ENCODE measurements at regions of chr22 and their contacts with region 1.

Region 1: DNA sequence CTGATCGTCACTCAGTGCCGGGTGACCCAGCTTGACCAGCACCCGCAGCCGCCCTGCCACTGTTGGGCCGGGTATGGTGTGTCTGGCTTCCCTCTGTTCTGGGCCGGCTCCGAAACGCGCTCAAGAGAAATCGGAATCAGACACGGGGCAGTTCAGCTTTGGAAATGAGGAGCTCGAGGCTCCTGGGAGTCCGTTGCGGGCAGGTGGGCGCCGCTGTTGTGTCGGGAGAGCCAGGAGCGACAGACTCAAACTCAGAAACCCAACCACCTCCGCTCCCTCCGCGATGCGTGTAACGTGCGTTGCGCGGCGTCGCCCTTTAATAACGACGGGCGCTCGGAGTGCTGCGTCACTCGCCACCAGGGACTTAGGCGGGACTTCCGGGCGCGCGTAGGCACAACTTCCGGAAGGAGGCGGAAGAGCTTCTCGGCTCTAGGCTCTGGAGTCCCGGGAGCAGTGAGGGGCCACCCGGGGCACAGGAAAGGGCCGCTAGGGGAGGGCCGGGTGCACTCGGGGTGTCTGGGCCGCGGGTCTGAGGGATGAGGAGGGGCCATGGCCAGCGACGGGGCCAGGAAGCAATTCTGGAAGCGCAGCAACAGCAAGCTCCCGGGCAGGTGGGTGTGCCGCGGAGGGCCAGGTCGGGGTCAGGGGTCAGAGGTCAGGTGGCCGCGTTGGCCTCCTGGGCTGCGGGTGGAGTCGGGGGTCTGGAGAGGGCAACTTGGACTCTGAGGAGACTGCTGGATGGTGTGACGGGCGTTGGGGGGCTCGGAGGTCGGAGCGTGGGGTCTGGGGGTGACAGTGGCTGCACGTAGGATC is at the start of gene TBC1D22A:
- DNase-seq: peak; percentile 93 to 96 (median 95)
- H3K4me3 ChIP-seq: peak within 1 kb of the TSS; percentile 71 to 98 (median 94)
- H3K27ac ChIP-seq: peak within 1 kb of the TSS; percentile 92 to 96
- H3K4me1 ChIP-seq: peaks cover 8 to 43% (median 36%) of the 10 kb centered on the region in 4 experiments
- H3K27me3 ChIP-seq: no peaks in the 10 kb centered on the region

Region 2: DNA sequence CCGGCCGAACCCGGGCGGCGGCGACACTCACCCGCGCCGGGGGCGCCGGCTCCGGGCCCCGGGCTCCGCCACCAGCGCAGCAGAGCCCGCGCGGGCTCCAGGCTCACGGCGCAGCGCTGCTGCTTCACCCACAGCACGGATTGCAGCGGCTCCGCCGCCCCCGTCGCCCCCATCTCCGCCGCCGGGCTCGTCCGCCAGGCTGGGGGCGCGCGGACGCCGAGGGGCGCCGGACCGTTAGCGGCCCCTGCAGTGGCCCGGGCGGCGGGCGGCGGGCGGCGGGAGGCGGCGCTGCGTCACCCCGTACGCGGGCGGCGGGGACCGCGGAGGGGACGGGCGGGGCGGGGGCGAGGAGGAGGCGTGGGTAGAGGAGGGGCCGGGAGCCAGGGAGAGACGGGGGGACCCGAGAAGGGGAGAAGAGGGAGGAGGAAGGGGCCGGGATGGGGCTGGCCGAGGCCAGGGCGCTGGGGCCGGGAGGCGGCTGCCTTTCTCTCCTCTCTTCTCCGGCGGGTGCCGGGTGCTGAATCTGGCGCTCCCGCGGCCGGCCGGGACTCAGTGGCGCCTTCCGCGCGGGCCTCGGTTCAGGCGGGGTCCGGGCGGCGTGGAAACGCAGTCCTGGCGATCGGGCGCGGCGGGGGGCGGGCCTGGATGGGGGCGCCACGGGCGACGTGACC is 24.3 kb before region 1 on chr22 and contains the start of gene CERK:
- CTCF ChIA-PET with region 1: interaction called, 33 read pairs
- POLR2A ChIA-PET with region 1: interaction called, 9 read pairs
- DNase-seq: peak; percentile 54 to 72 (median 58)
- H3K4me3 ChIP-seq: peak within 1 kb of the TSS; percentile 68 to 91 (median 78)
- H3K27ac ChIP-seq: peak within 1 kb of the TSS; percentile 46 to 76
- H3K4me1 ChIP-seq: peaks cover 12 to 45% (median 41%) of the 10 kb centered on the region in 4 experiments
- H3K27me3 ChIP-seq: no peaks in the 10 kb centered on the region

Region 3: GRCh38 chr22:46748908-46749675 is 13.4 kb before region 1 on chr22:
- CTCF ChIA-PET with region 1: interaction called, 24 read pairs
- POLR2A ChIA-PET with region 1: interaction called, 17 read pairs
- DNase-seq: peak; percentile 70 to 98 (median 97)
- H3K4me3 ChIP-seq: peak overlapping the region in 3 of 7 experiments; percentile 6 to 62 (median 13)
- H3K27ac ChIP-seq: peak overlapping the region; percentile 59 to 76
- H3K4me1 ChIP-seq: peaks cover 8 to 58% (median 44%) of the 10 kb centered on the region in 4 experiments
- H3K27me3 ChIP-seq: no peaks in the 10 kb centered on the region

Region 4: GRCh38 chr22:46774253-46774979 is 12.0 kb after region 1 on chr22:
- CTCF ChIA-PET with region 1: interaction called, 11 read pairs
- POLR2A ChIA-PET with region 1: interaction called, 17 read pairs
- DNase-seq: peak in 2 of 3 donors; percentile 53 to 63
- H3K4me3 ChIP-seq: peak overlapping the region in 5 of 7 experiments; percentile 17 to 67 (median 47)
- H3K27ac ChIP-seq: peak overlapping the region; percentile 48 to 83
- H3K4me1 ChIP-seq: peaks cover 14 to 66% (median 61%) of the 10 kb centered on the region in 4 experiments
- H3K27me3 ChIP-seq: no peaks in the 10 kb centered on the region

Region 5: GRCh38 chr22:46797355-46797754 is 34.9 kb after region 1 on chr22:
- CTCF ChIA-PET with region 1: interaction called, 72 read pairs
- POLR2A ChIA-PET with region 1: interaction called, 4 read pairs
- DNase-seq: peak in 2 of 3 donors; percentile 35 to 45
- H3K4me3 ChIP-seq: no peak overlapping the region
- H3K27ac ChIP-seq: no peak overlapping the region
- H3K4me1 ChIP-seq: peaks cover 0 to 3% (median 0%) of the 10 kb centered on the region in 4 experiments
- H3K27me3 ChIP-seq: no peaks in the 10 kb centered on the region

Region 6: DNA sequence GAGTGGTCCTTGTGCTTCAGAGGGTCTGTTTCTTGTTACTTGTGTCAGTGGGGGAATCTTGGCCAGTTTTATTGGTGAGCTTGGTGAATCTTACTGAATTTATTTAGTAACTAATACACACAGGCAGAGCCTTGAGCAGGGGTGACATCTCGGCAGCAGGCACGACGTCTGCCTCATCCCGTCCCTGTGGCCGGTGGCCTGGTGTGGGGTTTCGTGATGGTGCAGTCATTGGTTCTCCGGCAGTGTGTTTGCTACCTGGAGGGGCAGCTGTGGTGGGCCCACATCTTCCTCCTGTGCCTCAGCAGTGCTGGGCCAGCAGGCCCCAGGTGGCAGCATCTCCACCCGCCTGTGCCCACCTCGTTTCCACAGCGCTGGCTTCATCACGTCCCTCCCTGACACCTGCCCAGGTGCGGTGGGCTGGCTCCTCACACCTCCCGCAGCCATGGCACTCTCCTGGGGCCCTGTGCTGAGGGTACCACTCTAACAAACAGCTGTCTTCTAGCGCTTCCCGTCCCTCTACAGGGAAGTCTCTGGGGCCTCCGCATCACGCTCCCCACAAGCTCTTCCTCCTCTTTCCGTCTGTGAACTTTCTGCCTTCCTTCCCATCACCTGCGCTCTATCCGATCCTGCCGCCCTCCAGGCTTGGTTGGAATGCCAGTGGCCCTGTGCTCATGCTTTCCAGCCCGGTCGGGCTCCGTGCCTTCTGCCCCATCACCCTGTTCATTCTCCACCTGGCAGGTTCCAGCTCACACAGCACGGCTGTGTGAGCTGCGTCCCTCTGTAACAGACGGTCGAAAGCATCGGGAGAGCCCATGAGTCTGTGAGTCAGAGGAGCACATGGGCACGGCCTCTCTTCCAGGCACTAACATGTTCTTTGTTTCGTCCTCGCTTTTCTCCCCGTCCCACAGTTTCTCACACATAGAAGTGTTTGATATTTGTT is 203.4 kb after region 1 on chr22:
- CTCF ChIA-PET with region 1: no interaction called
- POLR2A ChIA-PET with region 1: no interaction called
- DNase-seq: no peak
- H3K4me3 ChIP-seq: no peak overlapping the region
- H3K27ac ChIP-seq: no peak overlapping the region
- H3K4me1 ChIP-seq: peaks cover 0 to 4% (median under 1%) of the 10 kb centered on the region in 4 experiments
- H3K27me3 ChIP-seq: no peaks in the 10 kb centered on the region